ENCODE measurements at regions of chr5 and their contacts with region 1.

Region 1: DNA sequence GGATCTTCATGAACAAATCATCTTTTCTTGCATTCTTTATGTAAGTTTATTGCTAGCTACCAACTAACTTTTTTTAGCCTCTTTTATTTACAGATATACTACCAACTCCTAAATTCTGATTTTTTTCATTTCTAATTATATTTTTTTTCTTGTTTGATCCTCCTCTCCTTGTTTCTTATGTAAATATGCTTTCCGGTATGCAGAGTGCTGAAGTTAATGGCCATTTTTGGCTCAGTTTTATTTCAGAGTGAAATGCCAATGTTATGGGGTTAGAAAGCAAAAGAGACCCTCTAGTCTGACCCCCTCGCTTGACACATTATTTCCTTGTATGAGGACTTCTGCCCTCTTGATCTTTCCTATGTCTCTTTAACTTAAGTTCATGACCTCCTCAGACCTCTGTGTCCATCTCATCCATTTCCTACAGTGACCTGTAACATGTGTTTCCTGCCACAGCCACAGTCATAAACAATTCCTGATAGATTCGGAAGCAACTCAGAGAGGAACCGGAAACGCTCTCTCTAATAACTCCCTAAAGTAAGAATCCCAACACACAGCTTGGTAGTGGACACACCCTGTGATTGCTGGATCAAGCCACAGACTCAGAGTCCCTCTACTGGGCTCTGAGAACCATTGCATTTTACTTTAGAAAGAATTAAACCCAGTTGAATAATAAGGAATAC is 42.9 kb upstream of the AFAP1L1 start:
- DNase-seq: peak; percentile 84
- H3K4me3 ChIP-seq: no peak overlapping the region
- H3K27ac ChIP-seq: peak overlapping the region; percentile 42
- H3K4me1 ChIP-seq: peaks cover 30% of the 10 kb centered on the region
- H3K27me3 ChIP-seq: no peaks in the 10 kb centered on the region
- CTCF ChIP-seq: peak; percentile 64 to 73
- POLR2A ChIP-seq: no peak

Region 2: DNA sequence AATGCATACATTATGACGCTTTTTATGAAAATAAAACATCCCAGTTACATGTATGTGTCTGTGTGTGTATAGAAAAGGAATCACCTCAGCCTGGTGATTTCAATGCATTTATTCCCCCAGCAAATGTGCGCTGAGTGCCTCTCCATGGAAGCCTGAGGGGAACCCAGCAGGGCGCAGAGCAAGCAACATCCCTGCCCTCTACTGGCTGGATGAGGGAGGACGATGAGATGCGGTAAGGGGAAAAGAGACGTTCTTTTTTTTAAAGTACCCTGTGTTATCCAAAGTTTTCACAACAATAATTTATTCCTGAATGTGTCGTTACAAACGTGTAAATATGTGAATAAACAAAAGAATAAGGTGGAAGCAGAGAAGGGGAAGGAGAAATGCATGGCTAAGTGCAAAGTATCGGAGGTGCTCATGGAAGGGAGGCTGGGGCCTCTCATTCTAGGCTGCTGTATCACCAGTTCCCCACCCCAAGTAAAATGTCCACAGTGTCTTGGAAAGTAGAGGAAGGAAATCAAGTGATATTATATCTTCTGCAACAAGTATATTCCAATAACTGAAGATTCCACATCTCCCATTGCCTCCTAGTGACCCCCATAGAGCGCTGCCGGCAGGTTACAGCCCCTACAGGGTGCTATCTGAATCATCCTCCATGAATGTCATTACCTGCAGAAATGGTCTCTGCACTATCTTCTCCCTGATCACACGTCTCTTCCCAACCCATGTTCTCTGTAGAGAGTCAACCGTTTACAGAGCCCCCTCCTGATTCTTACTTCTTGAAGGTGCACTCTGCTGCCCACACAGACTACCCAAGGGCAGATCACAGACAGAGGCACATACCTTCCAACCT is 100.5 kb before region 1 on chr5:
- CTCF ChIA-PET with region 1: interaction called, 71 read pairs
- POLR2A ChIA-PET with region 1: no interaction called
- dilution Hi-C with region 1: no loop called
- intact Hi-C with region 1: loop called (anchors 1 kb)
- DNase-seq: peak; percentile 16
- H3K4me3 ChIP-seq: no peak overlapping the region
- H3K27ac ChIP-seq: no peak overlapping the region
- H3K4me1 ChIP-seq: peaks cover 12% of the 10 kb centered on the region
- H3K27me3 ChIP-seq: no peaks in the 10 kb centered on the region
- CTCF ChIP-seq: peak; percentile 75 to 80
- POLR2A ChIP-seq: no peak

Region 3: DNA sequence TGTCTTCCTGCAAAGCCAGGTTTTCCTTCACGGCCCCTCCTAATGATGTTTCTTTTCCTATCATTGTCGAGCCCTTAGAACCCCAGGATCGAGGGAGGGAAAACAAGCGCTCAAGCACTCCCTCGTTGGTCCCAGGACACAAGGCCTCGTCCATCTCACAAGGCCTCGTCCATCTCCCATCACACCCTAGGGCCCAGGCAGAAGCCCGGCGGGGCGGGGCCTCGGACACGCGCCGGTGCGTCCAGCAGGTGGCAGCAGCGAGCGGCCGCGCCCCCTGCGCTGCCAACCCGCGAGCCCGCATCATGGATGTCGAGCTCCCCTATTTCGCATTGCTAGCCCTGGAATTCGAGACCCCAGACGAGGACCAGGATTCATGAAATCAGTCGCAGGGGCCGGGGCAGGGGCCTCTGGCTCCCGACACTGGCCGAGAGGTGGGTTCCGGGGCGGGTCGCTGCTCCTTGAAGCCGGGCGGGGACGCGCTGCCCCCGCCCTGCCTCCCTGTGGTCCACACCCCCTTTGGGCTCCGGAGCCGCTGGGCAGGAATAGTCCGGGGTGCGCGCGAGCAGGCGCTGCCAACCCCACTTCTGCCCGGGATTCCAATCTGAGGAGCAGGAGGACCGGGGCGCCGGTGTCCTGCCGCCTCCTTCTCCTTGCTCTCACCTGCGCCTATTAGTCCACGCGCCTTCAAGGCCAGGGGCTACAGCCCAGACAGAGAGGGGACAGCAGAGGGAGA is 87.4 kb before region 1 on chr5 and contains the start of gene ABLIM3:
- CTCF ChIA-PET with region 1: interaction called, 238 read pairs
- POLR2A ChIA-PET with region 1: interaction called, 7 read pairs
- dilution Hi-C with region 1: no loop called
- intact Hi-C with region 1: loop called (anchors 1 kb)
- DNase-seq: peak; percentile 76
- H3K4me3 ChIP-seq: peak within 1 kb of the TSS; percentile 61 to 82 (median 66)
- H3K27ac ChIP-seq: peak within 1 kb of the TSS; percentile 65
- H3K4me1 ChIP-seq: peaks cover 33% of the 10 kb centered on the region
- H3K27me3 ChIP-seq: no peaks in the 10 kb centered on the region
- CTCF ChIP-seq: peak; percentile 89 to 97
- POLR2A ChIP-seq: no peak
- total RNA-seq, gene ABLIM3: 25.7 and 42.1 TPM in 2 replicates

Region 4: GRCh38 chr5:149174847-149175234 is 53.9 kb before region 1 on chr5:
- CTCF ChIA-PET with region 1: interaction called, 7 read pairs
- POLR2A ChIA-PET with region 1: no interaction called
- dilution Hi-C with region 1: no loop called
- intact Hi-C with region 1: loop called (anchors 1 kb)
- DNase-seq: no peak
- H3K4me3 ChIP-seq: no peak overlapping the region
- H3K27ac ChIP-seq: peak overlapping the region; percentile 81
- H3K4me1 ChIP-seq: peaks cover 36% of the 10 kb centered on the region
- H3K27me3 ChIP-seq: no peaks in the 10 kb centered on the region
- CTCF ChIP-seq: no peak
- POLR2A ChIP-seq: no peak

Region 5: GRCh38 chr5:149240354-149240998 is 11.7 kb after region 1 on chr5:
- CTCF ChIA-PET with region 1: interaction called, 12 read pairs
- POLR2A ChIA-PET with region 1: no interaction called
- dilution Hi-C with region 1: no loop called
- intact Hi-C with region 1: no loop called
- DNase-seq: no peak
- H3K4me3 ChIP-seq: no peak overlapping the region
- H3K27ac ChIP-seq: no peak overlapping the region
- H3K4me1 ChIP-seq: peaks cover 9% of the 10 kb centered on the region
- H3K27me3 ChIP-seq: no peaks in the 10 kb centered on the region
- CTCF ChIP-seq: no peak
- POLR2A ChIP-seq: no peak

Region 6: GRCh38 chr5:149517461-149518122 is 288.8 kb after region 1 on chr5:
- CTCF ChIA-PET with region 1: no interaction called
- POLR2A ChIA-PET with region 1: no interaction called
- dilution Hi-C with region 1: no loop called
- intact Hi-C with region 1: no loop called
- DNase-seq: peak; percentile 22
- H3K4me3 ChIP-seq: no peak overlapping the region
- H3K27ac ChIP-seq: no peak overlapping the region
- H3K4me1 ChIP-seq: peaks cover 28% of the 10 kb centered on the region
- H3K27me3 ChIP-seq: no peaks in the 10 kb centered on the region
- CTCF ChIP-seq: no peak
- POLR2A ChIP-seq: peak; percentile 12

Measured in endothelial cell of umbilical vein (primary cell).